CD4-positive, alpha-beta T cell (primary cell): ENCODE measurements at regions of chr6 and their contacts with region 1.

Region 1: DNA sequence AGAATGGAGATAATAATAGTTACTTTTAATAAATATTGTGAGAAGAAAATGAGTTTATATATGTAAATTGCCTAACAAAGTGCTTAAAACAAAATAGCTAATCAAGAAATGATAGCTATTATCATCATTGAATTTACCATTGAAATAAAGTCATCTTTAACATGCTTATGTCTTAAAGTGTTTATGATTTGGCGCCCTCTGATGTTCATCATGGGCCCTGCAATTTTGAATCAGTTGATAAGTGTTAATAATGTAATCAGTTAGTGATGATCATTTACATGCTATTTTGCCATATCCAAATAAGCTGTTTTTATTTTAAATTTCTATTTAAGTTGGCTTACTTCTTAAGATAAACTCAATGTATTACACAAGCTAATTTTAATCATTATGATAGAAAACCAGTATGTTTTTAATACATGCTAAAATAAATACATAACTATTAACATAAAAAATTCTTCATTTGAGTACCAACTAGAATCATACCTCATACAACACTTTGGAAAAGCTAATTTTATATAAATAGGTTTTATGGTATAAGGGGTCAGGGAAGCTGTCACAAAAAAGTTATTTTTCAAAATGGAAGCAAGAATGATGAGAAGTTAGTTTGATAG is 39.2 kb upstream of the TPD52L1 start:
- DNase-seq: peak in 12 of 14 experiments; percentile 9 to 66 (median 28)
- ATAC-seq: no peak
- H3K4me3 ChIP-seq: no peak overlapping the region
- H3K4me3 Mint-ChIP-seq: no peak overlapping the region
- H3K27ac ChIP-seq: no peak overlapping the region
- H3K27ac Mint-ChIP-seq: no peak overlapping the region
- H3K4me1 ChIP-seq: no peaks in the 10 kb centered on the region
- H3K4me1 Mint-ChIP-seq: no peaks in the 10 kb centered on the region
- H3K27me3 ChIP-seq: no peaks in the 10 kb centered on the region
- H3K27me3 Mint-ChIP-seq: no peaks in the 10 kb centered on the region
- CTCF ChIP-seq: peak; percentile 87

Region 2: GRCh38 chr6:123415844-123416468 is 1698.4 kb before region 1 on chr6:
- CTCF ChIA-PET with region 1: no interaction called
- POLR2A ChIA-PET with region 1: no interaction called
- intact Hi-C with region 1: loop called in 1 of 2 experiments (anchors 5 kb)
- DNase-seq: peak in 6 of 14 experiments; percentile 1 to 32 (median 12)
- ATAC-seq: no peak
- H3K4me3 ChIP-seq: no peak overlapping the region
- H3K4me3 Mint-ChIP-seq: no peak overlapping the region
- H3K27ac ChIP-seq: no peak overlapping the region
- H3K27ac Mint-ChIP-seq: no peak overlapping the region
- H3K4me1 ChIP-seq: no peaks in the 10 kb centered on the region
- H3K4me1 Mint-ChIP-seq: no peaks in the 10 kb centered on the region
- H3K27me3 ChIP-seq: no peaks in the 10 kb centered on the region
- H3K27me3 Mint-ChIP-seq: no peaks in the 10 kb centered on the region
- CTCF ChIP-seq: peak; percentile 67

Region 3: GRCh38 chr6:123802697-123803496 is 1311.5 kb before region 1 on chr6:
- CTCF ChIA-PET with region 1: interaction called, 6 read pairs
- POLR2A ChIA-PET with region 1: no interaction called
- intact Hi-C with region 1: loop called (anchors 1 to 5 kb)
- DNase-seq: peak in 13 of 14 experiments; percentile 8 to 56 (median 32)
- ATAC-seq: peak; percentile 55
- H3K4me3 ChIP-seq: peak overlapping the region; percentile 20
- H3K4me3 Mint-ChIP-seq: no peak overlapping the region
- H3K27ac ChIP-seq: no peak overlapping the region
- H3K27ac Mint-ChIP-seq: no peak overlapping the region
- H3K4me1 ChIP-seq: peaks cover 9% of the 10 kb centered on the region
- H3K4me1 Mint-ChIP-seq: peaks cover 13% of the 10 kb centered on the region
- H3K27me3 ChIP-seq: peaks cover 19 to 36% of the 10 kb centered on the region in 2 experiments
- H3K27me3 Mint-ChIP-seq: peaks cover 79% of the 10 kb centered on the region
- CTCF ChIP-seq: peak; percentile 61

Region 4: DNA sequence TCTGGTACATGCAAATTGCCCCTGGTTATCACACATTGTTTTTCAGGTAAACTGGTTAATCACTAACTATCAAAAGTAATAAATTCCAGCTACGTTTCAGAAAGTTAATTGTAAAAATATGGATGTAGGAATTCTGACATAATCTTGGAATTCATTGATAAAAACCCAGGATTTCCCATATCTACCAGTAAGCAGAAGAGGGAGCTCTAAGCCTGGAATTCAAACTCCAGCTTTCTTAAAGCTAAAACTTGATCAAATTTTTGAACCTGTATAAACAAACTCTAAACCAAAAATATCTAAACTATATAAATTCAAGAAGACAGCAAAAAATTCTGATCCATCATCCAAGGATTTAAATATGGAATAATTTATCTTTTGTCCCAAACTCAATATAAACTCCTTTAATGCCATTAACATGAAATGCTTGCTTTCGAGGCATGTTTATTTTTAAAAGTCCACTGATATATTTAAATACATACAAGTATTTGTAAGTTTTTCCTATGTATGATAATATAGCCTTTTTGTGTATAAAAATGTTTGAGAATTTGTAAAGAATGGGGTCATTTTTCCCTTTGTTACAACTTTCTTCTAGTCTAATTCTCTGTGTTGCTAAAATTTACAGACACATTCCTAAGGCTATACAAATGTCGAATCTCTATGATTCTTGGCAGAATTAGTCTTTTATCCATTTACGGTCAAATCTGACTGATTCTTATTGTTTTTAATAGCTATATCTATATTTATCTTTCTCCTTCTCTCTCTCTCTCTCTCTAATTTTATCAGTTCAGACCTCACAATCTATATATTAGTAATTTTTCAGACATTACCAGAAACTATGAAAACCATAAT is 243.5 kb before region 1 on chr6:
- CTCF ChIA-PET with region 1: no interaction called
- POLR2A ChIA-PET with region 1: no interaction called
- intact Hi-C with region 1: loop called (anchors 1 to 2 kb)
- DNase-seq: peak in 3 of 14 experiments; percentile 6 to 32 (median 16)
- ATAC-seq: no peak
- H3K4me3 ChIP-seq: no peak overlapping the region
- H3K4me3 Mint-ChIP-seq: no peak overlapping the region
- H3K27ac ChIP-seq: no peak overlapping the region
- H3K27ac Mint-ChIP-seq: no peak overlapping the region
- H3K4me1 ChIP-seq: no peaks in the 10 kb centered on the region
- H3K4me1 Mint-ChIP-seq: no peaks in the 10 kb centered on the region
- H3K27me3 ChIP-seq: no peaks in the 10 kb centered on the region
- H3K27me3 Mint-ChIP-seq: peaks cover 7% of the 10 kb centered on the region
- CTCF ChIP-seq: peak; percentile 65